ENCODE measurements at regions of chr21 and their contacts with region 1.

Region 1: DNA sequence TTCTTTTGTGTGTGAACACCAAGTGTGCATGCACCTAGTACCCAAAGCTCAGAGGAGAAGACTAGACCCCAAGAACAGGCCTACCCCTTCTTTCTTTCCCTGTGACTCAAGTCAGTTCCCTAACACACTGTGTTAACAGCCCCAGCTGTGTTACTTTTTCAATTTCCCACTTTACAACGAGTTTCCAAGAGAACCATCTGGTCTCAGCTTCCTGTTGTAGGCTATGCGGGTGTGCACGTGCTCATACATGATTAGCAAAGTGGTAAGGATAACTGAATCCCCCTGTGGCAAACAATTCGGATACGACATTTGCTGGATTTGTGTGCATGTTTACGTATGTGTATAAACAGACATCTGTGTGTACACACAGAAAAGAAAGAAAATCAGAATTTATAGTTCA is 17.9 kb downstream of the IFNAR2 start:
- DNase-seq: no peak
- ATAC-seq: no peak
- H3K4me3 Mint-ChIP-seq: no peak overlapping the region
- H3K27ac Mint-ChIP-seq: no peak overlapping the region
- H3K4me1 Mint-ChIP-seq: peaks cover 16% of the 10 kb centered on the region
- H3K27me3 Mint-ChIP-seq: no peaks in the 10 kb centered on the region
- CTCF ChIP-seq: no peak

Region 2: DNA sequence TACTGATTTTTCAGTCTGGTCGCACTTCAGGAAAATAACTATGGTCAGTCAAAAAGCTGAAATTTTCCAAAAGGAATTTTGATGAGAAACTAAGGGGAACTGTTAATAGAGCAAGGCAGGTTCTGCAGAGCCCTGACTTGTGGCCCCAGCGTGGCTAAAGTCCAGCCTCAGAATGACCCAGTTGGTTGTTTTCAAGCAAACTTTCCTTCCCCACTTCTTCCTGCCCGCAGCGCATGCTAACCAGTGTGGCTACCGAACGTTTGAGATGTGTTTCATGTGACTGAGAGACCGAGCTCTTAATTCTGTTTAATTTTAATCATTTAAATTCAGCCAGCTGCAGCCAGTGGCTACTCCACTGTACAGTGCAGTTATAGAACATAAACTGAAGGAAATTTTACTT is 12.4 kb after region 1 on chr21:
- CTCF ChIA-PET with region 1: no interaction called
- POLR2A ChIA-PET with region 1: no interaction called
- intact Hi-C with region 1: loop called (anchors 1 kb)
- DNase-seq: no peak
- ATAC-seq: no peak
- H3K4me3 Mint-ChIP-seq: no peak overlapping the region
- H3K27ac Mint-ChIP-seq: peak overlapping the region; percentile 70
- H3K4me1 Mint-ChIP-seq: peaks cover 39% of the 10 kb centered on the region
- H3K27me3 Mint-ChIP-seq: no peaks in the 10 kb centered on the region
- CTCF ChIP-seq: no peak

Region 3: DNA sequence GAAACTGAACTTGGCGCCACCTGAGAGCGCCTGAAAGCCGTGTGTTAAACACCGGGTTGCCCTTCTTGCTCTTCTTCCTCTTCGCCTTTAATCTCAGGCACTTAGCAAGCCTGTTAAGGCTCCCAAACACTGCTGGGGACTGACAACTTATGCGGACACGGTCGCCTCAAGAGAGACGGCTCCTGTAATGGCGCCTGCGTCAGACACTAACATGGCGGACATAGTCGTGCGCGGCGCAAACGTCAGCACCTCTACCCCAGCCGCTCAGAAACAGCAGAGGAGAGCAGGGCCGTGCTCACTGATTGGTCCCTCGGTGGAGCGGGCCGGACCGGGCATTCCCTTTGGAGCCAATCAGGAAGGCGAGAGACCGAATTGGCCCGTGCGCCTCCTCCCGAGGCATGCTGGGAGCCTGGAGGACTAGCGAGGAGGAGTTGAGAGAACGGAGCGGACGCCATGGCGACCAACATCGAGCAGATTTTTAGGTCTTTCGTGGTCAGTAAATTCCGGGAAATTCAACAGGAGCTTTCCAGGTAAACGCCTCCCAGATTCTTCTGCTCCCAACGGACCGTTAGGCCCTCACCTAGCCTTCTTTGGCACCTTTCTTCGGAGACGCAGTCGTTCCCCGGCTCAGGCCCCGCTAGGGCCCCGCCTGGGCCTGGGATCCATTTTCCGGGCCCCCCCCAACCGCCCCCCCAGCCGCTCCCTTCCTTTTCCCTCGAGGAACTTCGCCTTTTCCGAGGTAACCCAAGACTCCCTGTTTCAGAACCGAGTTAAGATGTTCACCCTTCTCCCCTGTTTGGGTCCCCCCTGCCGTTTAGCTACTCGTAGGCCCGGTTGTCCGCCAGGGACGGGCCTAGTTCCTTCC is 295.3 kb after region 1 on chr21 and contains the start of gene SON:
- CTCF ChIA-PET with region 1: no interaction called
- POLR2A ChIA-PET with region 1: no interaction called
- intact Hi-C with region 1: no loop called
- DNase-seq: peak; percentile 86
- ATAC-seq: peak; percentile 88
- H3K4me3 Mint-ChIP-seq: peak within 1 kb of the TSS; percentile 98
- H3K27ac Mint-ChIP-seq: peak within 1 kb of the TSS; percentile 100
- H3K4me1 Mint-ChIP-seq: peaks cover 48% of the 10 kb centered on the region
- H3K27me3 Mint-ChIP-seq: no peaks in the 10 kb centered on the region
- CTCF ChIP-seq: no peak
- total RNA-seq, gene SON: 429 and 474 TPM in 2 replicates

Measured in activated B cell treated with CpG ODN at 0.5 μM for 24 hours (primary cell).